Spleen (tissue), 13 donors: ENCODE measurements at regions of chr1 and their contacts with region 1.

Region 1: DNA sequence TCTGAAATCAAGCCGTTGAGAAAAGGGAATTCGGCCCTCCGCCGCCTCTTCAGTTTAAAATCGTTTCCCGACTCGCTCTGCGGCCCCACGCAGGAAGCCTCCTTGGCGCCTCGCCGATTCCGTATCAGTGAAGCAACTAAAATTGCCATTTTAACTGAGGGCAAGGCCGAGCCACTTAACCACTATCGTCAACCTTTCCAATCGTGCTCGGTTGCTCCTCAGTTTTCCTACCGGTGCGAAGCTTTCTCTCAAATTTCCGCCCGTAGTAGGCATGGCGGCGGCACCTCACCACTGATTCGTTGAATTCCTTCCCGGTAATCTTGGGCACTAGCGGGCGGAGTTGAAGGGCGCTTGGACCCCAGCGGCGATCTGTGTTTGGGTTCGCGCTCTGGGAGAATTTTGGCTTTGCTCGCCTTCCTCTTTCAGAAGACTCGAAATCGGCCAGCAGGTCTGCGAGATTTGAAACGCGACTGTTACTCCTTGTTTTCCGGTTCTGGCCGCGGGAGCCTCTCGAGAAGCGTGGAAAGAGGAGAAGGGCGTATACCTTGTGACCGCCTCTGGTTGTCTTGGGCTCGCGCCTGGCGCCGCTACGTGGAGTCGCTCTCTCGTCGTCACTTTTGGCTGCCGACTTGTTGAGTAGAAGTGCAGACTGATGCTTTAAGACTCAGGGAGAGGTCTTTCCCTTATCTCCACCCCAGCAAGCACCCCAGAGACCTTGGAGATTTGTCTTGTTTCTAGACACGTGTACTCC is at the starts of genes CENPL and DARS2:
- DNase-seq: peak; percentile 96
- H3K4me3 ChIP-seq: peak within 1 kb of the TSS; percentile 67 to 99 (median 76)
- H3K27ac ChIP-seq: peak within 1 kb of the TSS; percentile 92 to 97 (median 94)
- H3K4me1 ChIP-seq: peaks cover 11 to 75% (median 48%) of the 10 kb centered on the region in 6 donors
- H3K27me3 ChIP-seq: no peaks in the 10 kb centered on the region
- CTCF ChIP-seq: peak in 1 of 11 experiments; percentile 15
- POLR2A ChIP-seq: peak in 1 of 3 donors; percentile 25
- total RNA-seq, gene CENPL: 4.7 to 22.2 (median 7.9) TPM
- total RNA-seq, gene DARS2: 12.6 to 23.3 (median 18.2) TPM

Region 2: GRCh38 chr1:173429471-173430402 is 394.8 kb before region 1 on chr1:
- intact Hi-C with region 1: loop called (anchors 5 kb)
- DNase-seq: peak; percentile 89
- H3K4me3 ChIP-seq: peak overlapping the region in 3 of 8 donors; percentile 5 to 44 (median 17)
- H3K27ac ChIP-seq: peak overlapping the region; percentile 65 to 86 (median 82)
- H3K4me1 ChIP-seq: peaks cover 22 to 34% (median 27%) of the 10 kb centered on the region in 6 donors
- H3K27me3 ChIP-seq: no peaks in the 10 kb centered on the region
- CTCF ChIP-seq: peak; percentile 45 to 78 (median 74)
- POLR2A ChIP-seq: no peak